ENCODE measurements at regions of chr12 and their contacts with region 1.

Region 1: DNA sequence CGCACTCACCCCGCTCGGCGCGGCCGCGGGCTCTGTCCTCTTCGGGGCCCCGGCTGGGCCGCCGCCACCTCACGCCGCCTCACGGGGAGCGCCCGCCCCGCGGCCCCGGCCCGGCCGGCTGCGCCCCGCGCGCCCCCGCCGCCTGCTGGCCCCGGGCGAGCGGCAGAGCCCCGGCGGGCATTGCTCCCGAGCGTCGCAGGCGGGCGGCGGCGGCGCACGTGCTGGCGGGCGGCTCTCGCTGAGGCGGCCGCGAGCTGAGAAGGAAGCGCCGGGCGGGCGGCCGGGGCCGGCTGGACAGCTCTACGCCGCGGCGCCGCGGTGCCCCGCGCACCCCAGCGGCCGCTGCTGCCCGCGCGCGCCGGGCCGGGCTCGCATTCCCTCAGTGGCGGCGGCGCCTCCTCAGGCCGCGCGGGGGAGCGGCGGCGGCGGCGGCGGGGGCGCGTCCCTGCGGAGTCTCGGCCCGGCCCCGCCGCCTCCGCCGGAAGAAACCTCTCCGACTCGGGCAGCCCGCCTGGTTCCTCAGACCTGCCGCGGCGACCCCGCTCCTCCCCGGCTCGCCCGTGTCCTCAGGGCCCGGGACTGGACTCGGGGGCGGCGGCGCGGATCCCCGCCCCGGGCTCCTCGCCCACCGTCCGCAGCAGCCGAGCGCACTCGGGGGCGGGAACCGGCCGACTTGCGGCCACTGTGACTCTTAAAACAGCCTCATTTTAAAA is at the start of gene PITPNM2:
- DNase-seq: peak; percentile 67 to 89
- H3K4me3 ChIP-seq: peak within 1 kb of the TSS; percentile 67 to 87 (median 76)
- H3K27ac ChIP-seq: peak within 1 kb of the TSS; percentile 85 to 92 (median 87)
- H3K4me1 ChIP-seq: peaks cover 11 to 49% (median 33%) of the 10 kb centered on the region in 4 donors
- H3K27me3 ChIP-seq: peaks cover 0 to 9% (median 0%) of the 10 kb centered on the region in 3 donors
- CTCF ChIP-seq: peak in 1 of 7 experiments; percentile 36
- EP300 ChIP-seq: no peak
- POLR2A ChIP-seq: no peak
- total RNA-seq, gene PITPNM2: 5.2 to 28.1 (median 13.4) TPM

Region 2: GRCh38 chr12:122851820-122852219 is 299.1 kb before region 1 on chr12:
- intact Hi-C with region 1: no loop called
- DNase-seq: no peak
- H3K4me3 ChIP-seq: no peak overlapping the region
- H3K27ac ChIP-seq: peak overlapping the region; percentile 34 to 69 (median 47)
- H3K4me1 ChIP-seq: peaks cover 16 to 29% (median 22%) of the 10 kb centered on the region in 4 donors
- H3K27me3 ChIP-seq: no peaks in the 10 kb centered on the region
- CTCF ChIP-seq: no peak
- EP300 ChIP-seq: no peak
- POLR2A ChIP-seq: no peak

Region 3: DNA sequence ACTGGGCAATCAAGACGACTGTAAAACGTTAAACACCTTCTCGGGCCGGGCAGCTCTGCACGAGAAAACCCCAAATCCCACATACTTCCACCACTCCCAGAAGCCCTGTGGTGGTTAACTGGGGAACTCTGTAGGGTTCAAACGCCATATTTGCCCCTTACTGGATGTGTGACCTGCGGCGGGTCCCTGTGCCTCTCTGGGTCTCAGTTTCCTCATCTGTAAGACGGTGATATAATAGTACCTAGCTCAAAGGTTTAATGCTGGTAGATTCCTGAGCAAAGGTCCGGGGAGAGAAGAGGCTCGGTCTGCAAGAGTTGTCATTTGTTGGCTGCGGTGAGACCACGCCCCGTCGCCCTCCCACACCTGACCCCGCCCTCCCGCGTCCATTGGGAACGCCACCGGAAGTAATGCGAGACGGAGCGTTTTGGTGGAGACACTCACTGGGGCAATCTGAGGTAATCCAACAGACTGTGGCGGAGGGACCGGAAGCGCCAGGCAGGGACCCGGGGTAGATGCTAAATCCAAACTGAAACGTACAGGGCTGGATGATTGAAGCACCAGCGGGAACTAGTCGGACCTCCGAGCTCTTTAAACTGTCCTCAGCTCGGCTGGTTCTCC is 176.5 kb before region 1 on chr12:
- intact Hi-C with region 1: loop called (anchors 10 kb)
- DNase-seq: peak; percentile 99
- H3K4me3 ChIP-seq: peak overlapping the region; percentile 75 to 99 (median 86)
- H3K27ac ChIP-seq: peak overlapping the region; percentile 96 to 99 (median 98)
- H3K4me1 ChIP-seq: peaks cover 30 to 56% (median 52%) of the 10 kb centered on the region in 4 donors
- H3K27me3 ChIP-seq: no peaks in the 10 kb centered on the region
- CTCF ChIP-seq: no peak
- EP300 ChIP-seq: no peak
- POLR2A ChIP-seq: no peak

Region 4: GRCh38 chr12:123427036-123427769 is 276.3 kb after region 1 on chr12:
- intact Hi-C with region 1: no loop called
- DNase-seq: peak in 1 of 2 donors; percentile 45
- H3K4me3 ChIP-seq: no peak overlapping the region
- H3K27ac ChIP-seq: no peak overlapping the region
- H3K4me1 ChIP-seq: peaks cover 0 to 11% (median 6%) of the 10 kb centered on the region in 4 donors
- H3K27me3 ChIP-seq: no peaks in the 10 kb centered on the region
- CTCF ChIP-seq: no peak
- EP300 ChIP-seq: no peak
- POLR2A ChIP-seq: no peak